CD4-positive, alpha-beta memory T cell (primary cell): ENCODE measurements at regions of chr3 and their contacts with region 1.

Region 1: DNA sequence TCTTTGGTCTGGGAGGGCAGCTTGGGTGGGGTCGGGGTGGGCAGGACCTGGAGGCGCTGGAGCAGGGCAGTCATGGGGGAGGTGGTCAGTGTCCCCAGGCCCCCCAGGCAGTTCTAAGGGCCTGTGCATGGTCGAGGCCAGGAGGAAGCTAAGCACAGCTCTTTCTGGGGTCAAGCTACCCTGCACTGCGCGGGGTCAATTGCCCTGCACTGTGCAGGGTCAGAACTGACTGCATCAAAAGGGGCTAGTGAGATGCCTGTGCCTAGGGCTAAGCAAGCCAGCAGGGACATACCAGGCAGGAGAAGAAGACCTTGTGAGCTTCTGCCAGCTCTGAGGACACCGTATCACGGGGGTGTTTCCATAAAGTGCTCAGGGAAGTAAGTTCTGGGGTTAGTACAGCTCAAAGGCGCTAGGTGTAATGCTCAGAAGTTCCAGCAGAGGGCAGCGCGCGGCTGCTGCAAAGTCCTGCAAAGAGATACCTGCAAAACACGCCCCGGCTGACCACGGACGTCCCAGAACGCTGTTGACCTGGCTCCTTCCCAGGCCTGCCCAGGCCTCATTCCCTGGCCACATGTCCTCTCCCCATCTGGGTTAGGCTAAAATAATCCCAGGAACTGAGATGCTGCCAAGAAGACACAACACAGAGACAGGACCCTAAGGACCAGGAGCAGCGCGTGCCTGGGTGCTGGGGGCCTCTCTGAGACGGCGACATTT is 18.8 kb upstream of the IQSEC1 start:
- DNase-seq: peak; percentile 67 to 77 (median 71)
- H3K4me3 ChIP-seq: no peak overlapping the region
- H3K4me3 Mint-ChIP-seq: peak overlapping the region in 1 of 8 donors; percentile 60
- H3K27ac ChIP-seq: no peak overlapping the region
- H3K27ac Mint-ChIP-seq: no peak overlapping the region
- H3K4me1 ChIP-seq: peaks cover 6% of the 10 kb centered on the region
- H3K4me1 Mint-ChIP-seq: peaks cover 4 to 6% (median 5%) of the 10 kb centered on the region in 4 donors
- H3K27me3 ChIP-seq: no peaks in the 10 kb centered on the region
- H3K27me3 Mint-ChIP-seq: peaks cover 3 to 9% of the 10 kb centered on the region in 2 donors

Region 2: DNA sequence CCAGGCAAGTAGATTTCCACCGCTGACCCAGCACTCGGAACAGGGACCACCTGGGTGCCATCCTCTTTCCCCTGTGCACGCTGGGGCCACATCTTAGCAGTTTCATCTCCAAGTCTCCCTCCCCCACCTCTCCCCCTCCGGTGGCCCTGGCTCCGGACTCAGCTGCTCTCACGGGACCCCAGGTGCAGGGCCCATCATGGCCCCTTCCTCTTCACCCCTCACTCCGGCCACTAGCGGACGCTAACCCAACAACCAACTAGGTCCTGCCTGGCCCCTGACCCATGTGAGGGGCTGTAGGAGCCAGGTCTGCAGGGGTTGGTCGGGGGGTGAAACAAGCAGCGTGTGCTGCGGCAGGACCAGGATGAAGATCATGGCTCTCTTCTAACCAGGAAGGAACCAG is 12.5 kb after region 1 on chr3:
- CTCF ChIA-PET with region 1: interaction called, 14 read pairs
- POLR2A ChIA-PET with region 1: no interaction called
- intact Hi-C with region 1: no loop called
- DNase-seq: no peak
- H3K4me3 ChIP-seq: no peak overlapping the region
- H3K4me3 Mint-ChIP-seq: no peak overlapping the region
- H3K27ac ChIP-seq: no peak overlapping the region
- H3K27ac Mint-ChIP-seq: no peak overlapping the region
- H3K4me1 ChIP-seq: no peaks in the 10 kb centered on the region
- H3K4me1 Mint-ChIP-seq: no peaks in the 10 kb centered on the region
- H3K27me3 ChIP-seq: no peaks in the 10 kb centered on the region
- H3K27me3 Mint-ChIP-seq: peaks cover 0 to 4% of the 10 kb centered on the region in 2 donors

Region 3: DNA sequence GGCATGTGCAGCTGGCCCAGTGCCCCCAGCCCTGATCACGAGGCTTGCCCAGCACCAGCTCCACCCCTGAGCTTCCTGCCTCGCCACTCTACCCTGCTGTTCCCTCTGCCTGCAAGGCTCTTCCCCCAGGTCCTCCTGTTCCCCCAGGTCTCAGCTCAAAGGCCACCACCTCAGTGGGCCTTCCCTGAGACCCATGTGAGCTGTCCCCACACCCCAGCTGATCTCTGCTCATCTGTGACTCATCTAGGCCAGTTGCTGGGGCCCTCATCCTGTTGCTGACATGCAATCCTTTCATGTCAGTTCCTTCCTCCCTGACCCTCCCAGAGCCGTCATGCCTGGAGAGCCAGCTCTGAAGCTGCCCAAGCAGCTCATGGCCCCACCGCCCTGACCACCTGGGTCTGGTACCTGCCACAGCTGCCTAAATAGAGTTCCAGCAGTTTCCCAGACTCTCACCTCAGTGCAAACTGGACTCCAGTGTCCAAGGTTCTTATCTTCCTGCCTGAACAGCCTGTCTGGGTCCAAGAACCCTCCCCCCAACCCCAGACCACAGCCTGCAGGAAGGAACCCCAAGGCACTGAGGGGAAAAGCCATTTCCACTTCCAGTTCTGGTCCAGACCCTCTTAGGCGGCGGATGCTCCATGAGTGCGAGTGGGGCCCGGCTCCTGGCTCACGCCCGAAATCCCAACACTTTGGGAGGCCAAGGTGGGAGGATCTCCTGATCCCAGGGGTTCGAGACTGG is 97.8 kb after region 1 on chr3:
- CTCF ChIA-PET with region 1: no interaction called
- POLR2A ChIA-PET with region 1: no interaction called
- intact Hi-C with region 1: no loop called
- DNase-seq: peak; percentile 5 to 48 (median 32)
- H3K4me3 ChIP-seq: no peak overlapping the region
- H3K4me3 Mint-ChIP-seq: peak overlapping the region; percentile 22 to 90 (median 80)
- H3K27ac ChIP-seq: no peak overlapping the region
- H3K27ac Mint-ChIP-seq: peak overlapping the region in 6 of 7 donors; percentile 76 to 97 (median 90)
- H3K4me1 ChIP-seq: peaks cover 27% of the 10 kb centered on the region
- H3K4me1 Mint-ChIP-seq: peaks cover 17 to 45% (median 29%) of the 10 kb centered on the region in 4 donors
- H3K27me3 ChIP-seq: no peaks in the 10 kb centered on the region
- H3K27me3 Mint-ChIP-seq: peaks cover 2 to 4% of the 10 kb centered on the region in 2 donors

Region 4: GRCh38 chr3:13461169-13462158 is 369.4 kb after region 1 on chr3:
- CTCF ChIA-PET with region 1: interaction called, 92 read pairs
- POLR2A ChIA-PET with region 1: interaction called, 6 read pairs
- intact Hi-C with region 1: loop called (anchors 1 kb)
- DNase-seq: peak; percentile 53 to 75 (median 73)
- H3K4me3 ChIP-seq: no peak overlapping the region
- H3K4me3 Mint-ChIP-seq: peak overlapping the region in 1 of 8 donors; percentile 36
- H3K27ac ChIP-seq: no peak overlapping the region
- H3K27ac Mint-ChIP-seq: peak overlapping the region in 1 of 7 donors; percentile 80
- H3K4me1 ChIP-seq: peaks cover 4% of the 10 kb centered on the region
- H3K4me1 Mint-ChIP-seq: peaks cover 0 to 4% (median 2%) of the 10 kb centered on the region in 4 donors
- H3K27me3 ChIP-seq: no peaks in the 10 kb centered on the region
- H3K27me3 Mint-ChIP-seq: peaks cover 3 to 8% of the 10 kb centered on the region in 2 donors

Region 5: GRCh38 chr3:13648060-13649001 is 556.3 kb after region 1 on chr3:
- CTCF ChIA-PET with region 1: interaction called, 93 read pairs
- POLR2A ChIA-PET with region 1: no interaction called
- intact Hi-C with region 1: loop called (anchors 1 kb)
- DNase-seq: peak; percentile 62 to 76 (median 72)
- H3K4me3 ChIP-seq: no peak overlapping the region
- H3K4me3 Mint-ChIP-seq: peak overlapping the region in 6 of 8 donors; percentile 35 to 76 (median 56)
- H3K27ac ChIP-seq: no peak overlapping the region
- H3K27ac Mint-ChIP-seq: peak overlapping the region in 3 of 7 donors; percentile 10 to 83 (median 77)
- H3K4me1 ChIP-seq: peaks cover 41% of the 10 kb centered on the region
- H3K4me1 Mint-ChIP-seq: peaks cover 11 to 53% (median 35%) of the 10 kb centered on the region in 4 donors
- H3K27me3 ChIP-seq: no peaks in the 10 kb centered on the region
- H3K27me3 Mint-ChIP-seq: peaks cover 0 to 8% of the 10 kb centered on the region in 2 donors